ENCODE measurements at regions of chrX and their contacts with region 1.

Region 1: GRCh38 chrX:40877887-40878286 is 142.5 kb upstream of the MED14 start:
- DNase-seq: no peak

Region 2: GRCh38 chrX:39504850-39505259 is 1373.0 kb before region 1 on chrX:
- intact Hi-C with region 1: no loop called
- DNase-seq: no peak

Region 3: GRCh38 chrX:41090568-41091238 is 212.8 kb after region 1 on chrX:
- intact Hi-C with region 1: loop called in 1 of 2 experiments (anchors 10 kb)
- DNase-seq: no peak